ENCODE measurements at regions of chr18 and their contacts with region 1.

Region 1: DNA sequence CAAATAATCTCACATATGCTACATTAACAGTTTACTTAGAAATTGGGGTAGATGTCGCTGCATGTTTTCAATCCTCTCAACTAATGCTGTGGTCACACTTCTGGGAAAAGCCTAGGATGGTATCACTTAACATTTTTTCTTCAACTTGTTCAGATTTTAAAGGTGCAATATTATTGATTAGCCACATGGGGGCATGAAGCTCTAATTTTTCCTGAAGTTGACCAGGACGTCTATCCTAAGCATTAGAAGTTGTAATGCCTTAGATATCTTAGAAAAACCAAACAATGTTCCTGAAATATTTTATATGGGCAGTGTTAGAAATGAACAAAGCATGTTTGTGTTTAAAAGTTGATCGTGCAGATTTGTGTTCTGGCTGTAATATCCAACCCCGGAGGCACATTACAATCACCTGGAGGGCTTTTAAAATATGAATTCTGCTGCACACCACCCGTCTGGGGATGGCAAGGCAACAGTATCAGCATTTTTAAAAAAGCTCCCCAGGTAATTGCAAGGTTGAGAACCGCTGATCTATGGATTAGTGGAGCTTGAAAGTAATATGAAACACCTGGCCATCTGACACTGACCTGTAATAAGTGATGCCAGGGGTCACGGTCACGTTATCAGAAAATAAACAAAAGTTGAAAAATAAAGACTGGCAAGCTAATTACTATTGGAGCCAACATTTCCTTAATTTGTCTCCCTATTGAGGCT is 100.5 kb upstream of the LMAN1 start:
- DNase-seq: no peak
- ATAC-seq: peak in 3 of 4 donors; percentile 10 to 56 (median 47)
- H3K4me3 ChIP-seq: no peak overlapping the region
- H3K27ac ChIP-seq: no peak overlapping the region
- H3K4me1 ChIP-seq: peaks cover 0 to 22% (median 3%) of the 10 kb centered on the region in 12 donors
- H3K27me3 ChIP-seq: peaks cover 0 to 10% (median 0%) of the 10 kb centered on the region in 9 donors
- CTCF ChIP-seq: peak; percentile 46 to 72 (median 64)
- POLR2A ChIP-seq: no peak

Region 2: GRCh38 chr18:59555995-59556659 is 96.6 kb after region 1 on chr18:
- intact Hi-C with region 1: loop called in 1 of 10 experiments (anchors 10 kb)
- DNase-seq: no peak
- ATAC-seq: peak in 2 of 4 donors; percentile 41 to 64
- H3K4me3 ChIP-seq: no peak overlapping the region
- H3K27ac ChIP-seq: no peak overlapping the region
- H3K4me1 ChIP-seq: peaks cover 0 to 12% (median 0%) of the 10 kb centered on the region in 12 donors
- H3K27me3 ChIP-seq: no peaks in the 10 kb centered on the region
- CTCF ChIP-seq: no peak
- POLR2A ChIP-seq: no peak

Region 3: GRCh38 chr18:59612381-59612780 is 152.9 kb after region 1 on chr18:
- intact Hi-C with region 1: loop called in 5 of 10 experiments (anchors 5 to 10 kb)
- DNase-seq: no peak
- ATAC-seq: peak in 1 of 4 donors; percentile 28
- H3K4me3 ChIP-seq: no peak overlapping the region
- H3K27ac ChIP-seq: no peak overlapping the region
- H3K4me1 ChIP-seq: no peaks in the 10 kb centered on the region
- H3K27me3 ChIP-seq: no peaks in the 10 kb centered on the region
- CTCF ChIP-seq: no peak
- POLR2A ChIP-seq: no peak

Region 4: DNA sequence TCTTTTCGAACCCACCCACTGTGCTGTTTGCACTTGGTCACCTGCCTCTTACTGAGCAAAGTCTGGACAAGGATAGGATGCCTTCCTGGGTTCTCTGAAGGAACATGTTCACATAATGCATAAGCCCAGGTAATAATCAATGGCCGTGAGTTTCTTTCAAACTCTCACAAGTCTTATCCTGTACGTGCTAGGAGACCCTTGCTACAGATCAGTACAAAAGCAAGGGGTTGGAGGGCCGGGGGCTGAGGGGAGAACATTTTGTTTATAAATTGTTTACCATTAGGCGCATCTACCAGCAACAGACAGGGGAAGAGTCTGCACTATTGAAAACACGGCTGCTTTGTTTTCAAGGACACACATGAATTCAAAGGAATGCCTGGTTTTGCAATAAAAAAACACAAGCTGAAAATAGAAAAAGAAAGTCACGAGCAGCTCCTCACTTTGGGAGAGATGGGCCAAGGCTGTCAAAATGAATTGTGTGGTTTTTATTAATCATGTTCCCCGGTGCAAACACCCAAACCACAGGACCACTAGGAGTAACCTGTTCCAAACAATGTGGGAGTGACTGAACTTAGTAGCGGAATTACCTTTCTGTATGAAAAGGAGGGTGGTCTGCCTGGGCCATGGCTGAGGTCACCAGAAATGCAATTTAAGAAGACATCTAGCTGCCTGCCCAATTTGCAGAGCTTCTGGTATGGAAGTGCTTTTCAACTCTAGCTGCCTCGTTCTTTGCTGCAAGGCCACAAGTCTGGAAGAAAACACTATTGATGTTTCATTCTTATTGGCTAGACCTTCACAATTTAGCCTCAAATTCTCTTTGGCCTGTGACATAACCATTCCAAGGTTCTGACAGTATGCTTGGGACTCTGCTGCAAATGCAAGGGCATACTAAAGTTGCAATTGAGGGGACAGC is 164.2 kb after region 1 on chr18:
- intact Hi-C with region 1: loop called in 4 of 10 experiments (anchors 5 to 10 kb)
- DNase-seq: no peak
- ATAC-seq: peak; percentile 19 to 59 (median 34)
- H3K4me3 ChIP-seq: peak overlapping the region in 1 of 12 donors; percentile 7
- H3K27ac ChIP-seq: peak overlapping the region in 4 of 12 donors; percentile 1 to 41 (median 17)
- H3K4me1 ChIP-seq: peaks cover 0 to 20% (median 1%) of the 10 kb centered on the region in 12 donors
- H3K27me3 ChIP-seq: no peaks in the 10 kb centered on the region
- CTCF ChIP-seq: no peak
- POLR2A ChIP-seq: no peak

Region 5: GRCh38 chr18:59697236-59697932 is 237.9 kb after region 1 on chr18 and contains the start of gene CCBE1:
- intact Hi-C with region 1: loop called in 6 of 10 experiments (anchors 5 to 10 kb)
- DNase-seq: peak; percentile 20 to 80 (median 53)
- ATAC-seq: peak in 3 of 4 donors; percentile 81 to 92 (median 85)
- H3K4me3 ChIP-seq: peak within 1 kb of the TSS; percentile 12 to 63 (median 52)
- H3K27ac ChIP-seq: peak within 1 kb of the TSS in 1 of 12 donors; percentile 86
- H3K4me1 ChIP-seq: peaks cover 0 to 18% (median 10%) of the 10 kb centered on the region in 12 donors
- H3K27me3 ChIP-seq: peaks cover 0 to 71% (median 19%) of the 10 kb centered on the region in 9 donors
- CTCF ChIP-seq: peak; percentile 61 to 91 (median 77)
- POLR2A ChIP-seq: no peak
- total RNA-seq, gene CCBE1: 0.20 to 6.3 (median 0.74) TPM